Naive thymus-derived CD4-positive, alpha-beta T cell (primary cell): ENCODE measurements at regions of chr3 and their contacts with region 1.

Region 1: DNA sequence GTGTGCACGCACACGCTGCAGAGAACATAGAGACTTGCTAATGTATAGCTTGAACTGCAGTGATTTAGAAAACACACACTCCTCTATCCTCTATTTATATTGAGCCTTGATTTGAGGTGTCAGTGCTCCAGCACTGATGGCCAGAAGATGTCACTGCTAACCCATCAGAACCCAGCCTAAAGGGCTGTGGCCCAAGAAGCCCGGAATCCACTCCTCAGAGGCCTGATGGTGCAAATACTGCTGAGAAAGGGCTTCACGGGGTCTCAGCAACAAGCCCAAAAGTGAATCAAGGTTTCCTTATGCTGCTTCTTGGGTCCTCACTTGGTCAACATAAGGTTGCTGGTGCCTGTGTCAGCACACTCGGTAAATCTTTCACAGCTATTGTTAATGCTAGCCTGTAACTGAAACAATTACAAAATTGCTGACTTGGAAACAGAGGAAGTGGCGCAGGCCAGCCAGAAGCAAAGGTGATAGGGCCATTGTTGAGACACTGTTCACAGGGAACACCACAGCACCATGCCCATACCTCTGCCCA is 60.3 kb downstream of the HEG1 start:
- DNase-seq: peak; percentile 28 to 69 (median 47)
- ATAC-seq: peak; percentile 93
- H3K4me3 ChIP-seq: no peak overlapping the region
- H3K4me3 Mint-ChIP-seq: peak overlapping the region in 2 of 10 donors; percentile 7 to 41
- H3K27ac ChIP-seq: no peak overlapping the region
- H3K27ac Mint-ChIP-seq: peak overlapping the region in 7 of 9 donors; percentile 21 to 80 (median 53)
- H3K4me1 ChIP-seq: no peaks in the 10 kb centered on the region
- H3K4me1 Mint-ChIP-seq: peaks cover 0 to 32% (median 19%) of the 10 kb centered on the region in 7 donors
- H3K27me3 ChIP-seq: no peaks in the 10 kb centered on the region
- H3K27me3 Mint-ChIP-seq: no peaks in the 10 kb centered on the region

Region 2: DNA sequence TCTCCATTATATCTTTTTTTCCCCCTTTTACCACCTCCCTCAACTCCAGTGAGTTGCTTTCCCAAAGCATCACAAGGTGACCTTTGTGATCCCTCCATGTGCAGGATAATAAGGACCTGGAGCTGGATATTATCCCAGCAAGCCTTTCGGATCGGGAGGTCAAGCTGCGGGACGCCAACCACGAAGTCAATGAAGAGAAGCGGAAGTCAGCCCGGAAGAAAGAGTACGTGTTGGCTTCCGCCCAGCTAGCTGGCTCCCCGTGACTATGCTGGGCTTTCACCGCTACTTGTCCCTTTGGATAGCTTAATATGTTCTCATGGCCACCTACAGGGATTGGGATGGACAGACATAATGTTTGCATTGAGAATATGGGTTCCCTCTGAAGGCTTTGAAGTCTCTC is 539.0 kb before region 1 on chr3:
- CTCF ChIA-PET with region 1: no interaction called
- POLR2A ChIA-PET with region 1: no interaction called
- intact Hi-C with region 1: no loop called
- DNase-seq: no peak
- ATAC-seq: no peak
- H3K4me3 ChIP-seq: no peak overlapping the region
- H3K4me3 Mint-ChIP-seq: no peak overlapping the region
- H3K27ac ChIP-seq: no peak overlapping the region
- H3K27ac Mint-ChIP-seq: no peak overlapping the region
- H3K4me1 ChIP-seq: no peaks in the 10 kb centered on the region
- H3K4me1 Mint-ChIP-seq: peaks cover 0 to 1% (median 0%) of the 10 kb centered on the region in 7 donors
- H3K27me3 ChIP-seq: no peaks in the 10 kb centered on the region
- H3K27me3 Mint-ChIP-seq: peaks cover 14 to 51% (median 37%) of the 10 kb centered on the region in 5 donors

Region 3: DNA sequence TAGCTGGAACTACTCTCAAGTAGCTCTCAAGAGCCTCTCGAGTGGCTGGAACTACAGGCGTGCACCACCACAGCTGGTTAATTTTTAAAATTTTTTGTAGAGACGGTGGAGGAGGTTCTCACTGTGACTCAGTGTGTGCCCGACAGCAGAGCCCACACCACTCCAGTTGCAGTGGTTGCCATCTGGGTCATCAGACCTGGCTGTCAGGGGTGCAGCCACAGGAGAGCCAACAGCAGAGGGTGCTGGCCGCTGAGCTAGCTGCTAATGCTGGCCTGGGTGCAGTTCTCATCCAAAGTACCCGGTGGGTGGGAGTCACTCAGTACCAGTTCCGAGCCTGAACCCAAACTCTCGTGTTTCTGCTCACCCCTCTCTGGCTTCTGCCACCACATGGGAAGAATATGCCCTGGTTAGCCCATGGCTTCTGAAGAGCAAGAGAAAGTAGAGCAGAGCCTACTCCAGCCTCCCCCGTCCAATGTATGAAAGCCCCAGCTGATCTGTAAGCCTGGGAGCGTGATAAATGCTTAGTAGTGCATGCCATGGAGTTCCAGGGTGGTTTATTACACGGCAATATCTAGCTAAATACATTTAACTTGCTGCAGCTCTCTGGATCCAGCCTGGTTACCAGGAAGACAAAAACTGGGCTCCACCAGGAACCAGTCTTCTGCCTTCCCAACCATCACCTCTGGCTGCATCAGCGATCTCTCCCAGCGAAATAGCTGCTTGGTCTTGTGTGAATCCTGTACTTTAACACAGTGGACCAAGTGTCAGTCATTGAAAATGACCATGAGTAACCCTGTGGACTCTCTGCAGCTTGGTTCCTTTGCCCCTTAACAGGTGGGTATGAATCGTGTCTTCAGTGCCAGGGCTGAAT is 248.2 kb before region 1 on chr3:
- CTCF ChIA-PET with region 1: no interaction called
- POLR2A ChIA-PET with region 1: no interaction called
- intact Hi-C with region 1: no loop called
- DNase-seq: no peak
- ATAC-seq: no peak
- H3K4me3 ChIP-seq: no peak overlapping the region
- H3K4me3 Mint-ChIP-seq: no peak overlapping the region
- H3K27ac ChIP-seq: no peak overlapping the region
- H3K27ac Mint-ChIP-seq: peak overlapping the region in 1 of 9 donors; percentile 12
- H3K4me1 ChIP-seq: no peaks in the 10 kb centered on the region
- H3K4me1 Mint-ChIP-seq: peaks cover 0 to 1% (median 0%) of the 10 kb centered on the region in 7 donors
- H3K27me3 ChIP-seq: no peaks in the 10 kb centered on the region
- H3K27me3 Mint-ChIP-seq: peaks cover 0 to 6% (median 0%) of the 10 kb centered on the region in 5 donors

Region 4: DNA sequence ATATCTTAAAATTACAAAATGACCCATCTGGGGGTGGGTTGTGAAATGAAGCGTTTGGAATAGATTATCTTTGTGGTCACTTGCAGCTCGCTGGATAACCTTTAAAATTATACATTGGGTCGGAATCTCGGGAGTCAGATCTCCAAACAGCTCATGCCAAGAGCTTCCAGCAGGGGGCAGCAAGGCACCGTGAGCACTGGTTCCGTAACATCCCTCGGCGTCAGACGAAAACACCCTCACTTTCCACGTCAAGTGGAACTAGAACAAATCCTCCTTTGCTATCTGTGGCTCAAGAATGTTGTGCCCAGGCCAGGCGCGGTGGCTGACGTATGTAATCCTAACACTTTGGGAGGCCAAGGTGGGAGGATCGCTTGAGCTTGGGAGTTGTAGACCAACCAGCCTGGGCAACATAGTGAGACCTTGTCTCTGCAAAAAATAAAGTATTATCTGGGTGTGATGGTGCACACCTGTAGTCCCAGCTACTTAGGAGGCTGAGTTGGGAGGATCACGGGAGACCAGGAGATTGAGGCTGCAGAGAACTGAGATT is 234.2 kb before region 1 on chr3:
- CTCF ChIA-PET with region 1: interaction called, 11 read pairs
- POLR2A ChIA-PET with region 1: no interaction called
- intact Hi-C with region 1: loop called in 1 of 2 experiments (anchors 5 kb)
- DNase-seq: peak; percentile 52 to 76 (median 68)
- ATAC-seq: peak; percentile 92
- H3K4me3 ChIP-seq: no peak overlapping the region
- H3K4me3 Mint-ChIP-seq: peak overlapping the region in 9 of 10 donors; percentile 16 to 84 (median 72)
- H3K27ac ChIP-seq: no peak overlapping the region
- H3K27ac Mint-ChIP-seq: peak overlapping the region in 3 of 9 donors; percentile 5 to 92 (median 65)
- H3K4me1 ChIP-seq: no peaks in the 10 kb centered on the region
- H3K4me1 Mint-ChIP-seq: peaks cover 0 to 7% (median 5%) of the 10 kb centered on the region in 7 donors
- H3K27me3 ChIP-seq: no peaks in the 10 kb centered on the region
- H3K27me3 Mint-ChIP-seq: peaks cover 0 to 1% (median 0%) of the 10 kb centered on the region in 5 donors

Region 5: GRCh38 chr3:124928333-124929202 is 67.0 kb before region 1 on chr3:
- CTCF ChIA-PET with region 1: no interaction called
- POLR2A ChIA-PET with region 1: no interaction called
- intact Hi-C with region 1: loop called in 1 of 2 experiments (anchors 1 kb)
- DNase-seq: peak; percentile 19 to 61 (median 37)
- ATAC-seq: peak; percentile 79
- H3K4me3 ChIP-seq: no peak overlapping the region
- H3K4me3 Mint-ChIP-seq: no peak overlapping the region
- H3K27ac ChIP-seq: no peak overlapping the region
- H3K27ac Mint-ChIP-seq: peak overlapping the region in 2 of 9 donors; percentile 18 to 49
- H3K4me1 ChIP-seq: no peaks in the 10 kb centered on the region
- H3K4me1 Mint-ChIP-seq: peaks cover 0 to 8% (median 0%) of the 10 kb centered on the region in 7 donors
- H3K27me3 ChIP-seq: no peaks in the 10 kb centered on the region
- H3K27me3 Mint-ChIP-seq: peaks cover 0 to 57% (median 11%) of the 10 kb centered on the region in 5 donors

Region 6: DNA sequence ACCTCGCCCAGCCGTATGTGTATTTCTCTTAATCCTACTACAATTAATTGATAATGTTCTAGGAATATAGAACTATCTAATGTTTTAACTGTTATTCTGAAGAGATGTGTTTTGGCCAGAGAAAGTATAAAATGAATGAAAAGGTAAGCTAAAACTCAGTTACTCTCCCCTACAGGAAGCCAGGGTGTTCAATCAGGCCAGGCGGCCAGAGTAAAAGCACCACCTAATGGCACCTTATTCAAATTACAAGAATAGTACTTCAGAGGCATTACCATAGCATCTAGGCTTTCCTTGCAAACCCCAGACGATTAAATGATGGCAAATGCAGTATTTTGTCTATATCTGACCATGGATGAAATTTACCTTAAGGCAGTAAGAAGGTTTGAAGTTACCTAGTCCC is 206.7 kb after region 1 on chr3:
- CTCF ChIA-PET with region 1: no interaction called
- POLR2A ChIA-PET with region 1: no interaction called
- intact Hi-C with region 1: loop called (anchors 1 kb)
- DNase-seq: peak in 3 of 9 donors; percentile 16 to 37 (median 27)
- ATAC-seq: peak; percentile 45
- H3K4me3 ChIP-seq: no peak overlapping the region
- H3K4me3 Mint-ChIP-seq: no peak overlapping the region
- H3K27ac ChIP-seq: no peak overlapping the region
- H3K27ac Mint-ChIP-seq: no peak overlapping the region
- H3K4me1 ChIP-seq: no peaks in the 10 kb centered on the region
- H3K4me1 Mint-ChIP-seq: peaks cover 0 to 8% (median 0%) of the 10 kb centered on the region in 7 donors
- H3K27me3 ChIP-seq: no peaks in the 10 kb centered on the region
- H3K27me3 Mint-ChIP-seq: peaks cover 0 to 22% (median 0%) of the 10 kb centered on the region in 5 donors

Region 7: DNA sequence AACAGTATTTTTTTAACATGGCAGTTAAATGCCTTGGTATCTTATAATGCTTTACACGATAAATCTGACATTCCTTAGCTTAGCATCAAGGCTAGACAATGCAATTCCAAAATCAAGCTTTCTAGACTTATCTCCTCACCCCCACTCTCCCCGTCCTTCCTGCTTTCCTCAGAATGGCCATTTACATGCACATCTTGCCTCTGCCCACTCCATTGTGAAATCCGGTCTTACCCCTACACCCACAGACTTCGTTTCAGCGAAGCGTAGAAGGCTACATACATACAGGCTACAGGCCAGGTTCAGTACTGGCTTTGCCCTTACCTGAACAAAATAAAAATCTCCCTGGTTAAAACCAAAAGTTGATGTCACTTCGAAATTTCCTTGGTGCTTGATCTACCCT is 275.6 kb after region 1 on chr3:
- CTCF ChIA-PET with region 1: no interaction called
- POLR2A ChIA-PET with region 1: no interaction called
- intact Hi-C with region 1: no loop called
- DNase-seq: no peak
- ATAC-seq: no peak
- H3K4me3 ChIP-seq: no peak overlapping the region
- H3K4me3 Mint-ChIP-seq: no peak overlapping the region
- H3K27ac ChIP-seq: no peak overlapping the region
- H3K27ac Mint-ChIP-seq: no peak overlapping the region
- H3K4me1 ChIP-seq: no peaks in the 10 kb centered on the region
- H3K4me1 Mint-ChIP-seq: peaks cover 3 to 33% (median 12%) of the 10 kb centered on the region in 7 donors
- H3K27me3 ChIP-seq: no peaks in the 10 kb centered on the region
- H3K27me3 Mint-ChIP-seq: no peaks in the 10 kb centered on the region

Region 8: DNA sequence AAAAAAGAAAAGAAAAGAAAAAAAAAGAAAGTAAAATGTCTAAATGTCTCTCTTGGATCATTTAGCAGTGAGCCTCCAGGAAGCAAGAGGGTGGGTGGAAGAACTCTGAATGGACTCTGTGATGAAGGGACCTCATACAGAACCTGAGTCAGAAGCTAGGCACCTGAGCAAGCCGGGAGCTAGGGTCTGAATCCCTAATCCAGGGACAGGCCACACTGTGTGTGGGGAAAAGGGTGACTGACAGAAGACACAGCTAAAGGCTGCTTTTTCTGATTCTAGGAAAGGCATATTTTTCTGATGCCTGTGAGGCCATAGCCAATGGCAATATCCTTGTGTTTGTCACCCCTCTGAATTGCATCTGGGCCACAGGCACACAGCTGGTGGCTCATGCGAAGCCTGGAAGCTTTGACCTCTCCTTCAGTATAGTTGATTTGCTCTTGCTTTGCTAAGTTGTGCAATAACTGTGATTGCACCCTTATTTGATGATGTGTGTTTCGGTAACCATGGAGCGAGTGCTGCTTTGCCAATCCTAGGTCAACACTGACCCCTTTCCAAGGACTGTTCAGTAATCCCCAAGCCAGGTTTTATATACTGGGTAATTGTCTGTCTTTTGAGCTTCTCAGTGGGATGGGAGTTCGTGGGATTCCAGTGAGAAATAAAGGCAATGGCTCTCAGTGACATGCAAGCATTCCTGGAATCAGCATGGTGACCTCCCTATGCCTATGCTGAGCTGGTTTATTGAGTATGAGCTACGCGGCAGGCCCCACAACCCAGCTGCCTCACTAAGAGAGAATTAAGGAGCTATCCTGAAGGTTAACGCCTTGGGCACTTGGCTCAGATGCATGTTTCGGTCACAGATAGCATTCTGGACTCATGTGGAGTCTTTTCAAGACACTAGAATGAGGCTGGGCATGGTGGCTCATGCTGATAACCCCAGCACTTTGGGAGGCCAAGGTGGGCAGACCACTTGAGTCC is 648.8 kb after region 1 on chr3:
- CTCF ChIA-PET with region 1: no interaction called
- POLR2A ChIA-PET with region 1: no interaction called
- intact Hi-C with region 1: no loop called
- DNase-seq: no peak
- ATAC-seq: peak; percentile 77
- H3K4me3 ChIP-seq: no peak overlapping the region
- H3K4me3 Mint-ChIP-seq: no peak overlapping the region
- H3K27ac ChIP-seq: no peak overlapping the region
- H3K27ac Mint-ChIP-seq: no peak overlapping the region
- H3K4me1 ChIP-seq: no peaks in the 10 kb centered on the region
- H3K4me1 Mint-ChIP-seq: no peaks in the 10 kb centered on the region
- H3K27me3 ChIP-seq: no peaks in the 10 kb centered on the region
- H3K27me3 Mint-ChIP-seq: peaks cover 0 to 2% (median 0%) of the 10 kb centered on the region in 5 donors